ENCODE measurements at regions of chr12 and their contacts with region 1.

Region 1: DNA sequence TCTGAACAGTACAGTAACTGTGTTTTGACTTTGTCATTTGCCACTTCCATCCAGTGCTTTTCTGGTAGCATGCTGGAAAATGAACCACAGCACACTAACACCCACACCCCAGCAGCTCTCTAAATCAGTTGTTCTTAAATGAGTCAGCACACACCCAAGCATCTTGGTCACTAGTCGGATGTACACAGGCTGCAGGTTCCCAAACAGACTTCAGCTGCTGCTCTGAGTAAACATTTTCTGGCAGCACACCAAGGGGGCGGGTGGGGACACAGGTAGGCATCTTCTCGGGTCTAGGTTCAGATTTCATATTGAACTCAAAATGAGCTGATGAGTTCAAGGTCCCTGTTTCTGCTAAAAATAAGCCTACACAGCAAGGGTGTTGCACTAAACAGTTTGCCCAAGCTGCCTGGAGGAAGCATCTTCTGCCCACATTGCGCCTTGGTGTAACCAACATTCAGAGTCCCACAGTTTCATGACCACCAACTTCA is 39.8 kb downstream of the IFNG start:
- DNase-seq: peak; percentile 74
- H3K4me3 Mint-ChIP-seq: peak overlapping the region; percentile 15
- H3K27ac Mint-ChIP-seq: no peak overlapping the region
- H3K4me1 Mint-ChIP-seq: peaks cover 48% of the 10 kb centered on the region
- H3K27me3 Mint-ChIP-seq: no peaks in the 10 kb centered on the region

Region 2: DNA sequence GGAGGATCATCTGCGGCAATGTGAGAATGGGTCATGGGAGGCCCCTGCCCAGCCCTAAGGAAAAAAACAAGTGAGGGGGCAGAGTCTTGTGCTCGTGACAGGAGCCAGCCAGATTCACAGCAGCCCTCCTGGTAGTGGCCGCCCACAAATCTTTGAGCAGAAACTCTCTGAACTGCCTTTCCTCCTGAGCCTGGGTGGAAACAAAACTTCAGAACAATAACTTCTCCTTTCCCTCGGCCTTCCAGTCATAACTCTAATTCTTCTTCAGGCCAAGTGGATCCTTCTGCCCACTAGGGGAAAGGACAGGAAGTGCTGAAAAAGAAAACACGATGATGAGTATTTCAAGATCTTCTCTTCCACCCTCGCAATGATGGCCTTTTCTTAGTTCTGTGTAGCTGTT is 662.0 kb before region 1 on chr12:
- intact Hi-C with region 1: loop called (anchors 10 kb)
- DNase-seq: no peak
- H3K4me3 Mint-ChIP-seq: no peak overlapping the region
- H3K27ac Mint-ChIP-seq: no peak overlapping the region
- H3K4me1 Mint-ChIP-seq: peaks cover 6% of the 10 kb centered on the region
- H3K27me3 Mint-ChIP-seq: peaks cover 27% of the 10 kb centered on the region

Region 3: DNA sequence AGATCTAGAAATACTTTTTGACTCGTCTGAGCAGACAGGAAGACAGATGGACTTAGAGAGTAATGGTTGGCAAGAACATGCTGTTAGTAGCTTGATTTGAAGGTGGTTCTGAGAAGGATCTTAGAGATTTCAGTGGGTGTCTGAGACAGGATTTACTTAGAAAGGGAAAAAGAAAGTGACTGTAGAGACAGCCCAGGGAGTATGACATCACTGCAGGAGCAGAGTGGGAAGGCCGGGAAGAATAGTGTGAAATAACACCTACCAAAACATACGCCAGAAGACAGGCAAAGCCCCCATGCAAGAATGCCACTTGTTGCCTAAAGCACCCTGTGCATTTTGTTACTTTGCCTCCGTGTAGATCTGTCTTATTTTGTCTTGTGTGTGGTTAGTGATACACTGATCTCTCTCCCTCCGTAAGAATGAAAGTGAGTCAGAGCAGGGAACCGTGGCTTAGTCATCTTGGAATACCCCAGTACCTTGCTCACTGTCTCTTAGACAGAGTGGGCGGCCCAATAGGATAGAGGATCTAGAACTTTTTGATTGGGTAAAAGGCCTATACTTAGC is 291.9 kb before region 1 on chr12:
- intact Hi-C with region 1: loop called (anchors 5 kb)
- DNase-seq: no peak
- H3K4me3 Mint-ChIP-seq: peak overlapping the region; percentile 3
- H3K27ac Mint-ChIP-seq: peak overlapping the region; percentile 67
- H3K4me1 Mint-ChIP-seq: peaks cover 14% of the 10 kb centered on the region
- H3K27me3 Mint-ChIP-seq: no peaks in the 10 kb centered on the region

Region 4: DNA sequence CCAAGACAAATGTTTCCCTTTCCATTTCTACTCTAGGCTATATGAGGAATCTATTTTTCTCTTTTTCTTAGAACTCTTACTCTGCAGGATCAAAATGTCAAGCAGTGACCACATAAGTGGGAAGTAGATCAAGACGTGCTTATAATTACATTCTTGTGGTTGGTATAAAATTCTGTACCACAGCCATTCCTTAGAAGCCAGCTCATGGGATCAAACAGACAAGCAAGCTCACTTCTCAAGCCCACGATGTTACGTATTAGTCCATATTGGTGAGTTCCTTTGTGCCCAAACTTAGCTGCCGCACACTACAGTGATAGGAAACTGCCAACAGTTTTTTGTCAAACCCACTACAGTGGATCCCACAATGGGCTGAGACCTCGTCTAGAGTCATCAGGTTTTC is 13.6 kb before region 1 on chr12:
- intact Hi-C with region 1: loop called (anchors 1 kb)
- DNase-seq: no peak
- H3K4me3 Mint-ChIP-seq: no peak overlapping the region
- H3K27ac Mint-ChIP-seq: no peak overlapping the region
- H3K4me1 Mint-ChIP-seq: peaks cover 16% of the 10 kb centered on the region
- H3K27me3 Mint-ChIP-seq: no peaks in the 10 kb centered on the region

Region 5: DNA sequence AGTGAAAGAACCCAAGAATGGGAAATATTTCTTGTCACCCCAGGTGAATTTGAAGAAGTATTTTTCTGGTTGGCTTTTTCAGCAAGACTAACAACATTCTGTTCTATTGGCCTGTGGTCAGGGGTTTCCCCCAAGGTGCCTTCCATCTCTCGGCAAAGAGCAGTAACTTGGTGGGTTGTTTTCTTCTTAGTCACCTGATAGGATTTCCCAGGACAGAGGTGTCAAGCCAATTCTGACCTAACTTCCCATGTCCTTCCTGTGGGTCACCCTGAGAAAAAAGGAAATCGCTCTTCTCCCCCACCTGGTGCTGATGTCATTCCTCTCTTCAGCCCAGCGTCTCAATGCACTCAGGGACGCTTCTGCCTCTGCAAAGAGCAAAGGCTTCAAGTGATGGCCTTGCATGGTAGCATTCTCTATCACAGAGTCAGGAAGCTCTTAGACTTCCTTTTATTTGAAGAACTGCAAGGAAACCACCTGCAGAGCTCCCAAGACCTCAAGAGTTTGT is 55.8 kb after region 1 on chr12:
- intact Hi-C with region 1: loop called (anchors 1 kb)
- DNase-seq: peak; percentile 81
- H3K4me3 Mint-ChIP-seq: peak overlapping the region; percentile 32
- H3K27ac Mint-ChIP-seq: peak overlapping the region; percentile 85
- H3K4me1 Mint-ChIP-seq: peaks cover 81% of the 10 kb centered on the region
- H3K27me3 Mint-ChIP-seq: no peaks in the 10 kb centered on the region

Region 6: GRCh38 chr12:68259318-68259940 is 139.7 kb after region 1 on chr12:
- intact Hi-C with region 1: loop called (anchors 2 kb)
- DNase-seq: peak; percentile 31
- H3K4me3 Mint-ChIP-seq: peak overlapping the region; percentile 12
- H3K27ac Mint-ChIP-seq: peak overlapping the region; percentile 69
- H3K4me1 Mint-ChIP-seq: peaks cover 68% of the 10 kb centered on the region
- H3K27me3 Mint-ChIP-seq: peaks cover 19% of the 10 kb centered on the region

Region 7: GRCh38 chr12:68303850-68304249 is 184.1 kb after region 1 on chr12:
- intact Hi-C with region 1: loop called (anchors 1 kb)
- DNase-seq: no peak
- H3K4me3 Mint-ChIP-seq: no peak overlapping the region
- H3K27ac Mint-ChIP-seq: no peak overlapping the region
- H3K4me1 Mint-ChIP-seq: peaks cover 59% of the 10 kb centered on the region
- H3K27me3 Mint-ChIP-seq: no peaks in the 10 kb centered on the region

Region 8: DNA sequence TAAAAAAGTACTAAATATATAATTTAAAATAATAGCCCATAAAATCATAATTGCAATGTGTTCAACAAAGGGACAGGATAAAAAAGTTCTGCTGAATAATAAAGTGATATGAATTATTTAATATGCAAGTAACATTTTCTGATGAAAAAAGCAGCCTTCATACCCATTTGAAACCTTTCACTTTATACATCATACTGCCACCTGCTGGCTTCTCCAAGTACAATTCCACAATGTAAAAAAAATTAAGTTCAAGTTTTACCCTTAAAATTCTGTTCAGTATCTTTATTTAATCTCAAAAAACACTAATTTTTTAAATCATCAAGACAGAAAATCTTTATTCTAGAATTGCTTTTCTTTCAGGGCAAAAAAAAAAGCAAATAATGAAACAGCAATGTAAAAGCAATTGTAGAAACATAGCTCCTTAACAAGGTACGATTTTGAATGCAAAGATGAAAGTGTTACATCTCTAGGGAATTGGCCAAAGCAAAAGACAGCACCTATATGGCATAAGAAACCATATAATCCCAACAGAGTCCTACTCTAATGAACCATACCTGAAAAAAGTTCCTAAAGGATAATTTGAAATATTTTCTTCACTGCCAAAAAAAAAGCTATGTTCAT is 197.4 kb after region 1 on chr12:
- intact Hi-C with region 1: no loop called
- DNase-seq: no peak
- H3K4me3 Mint-ChIP-seq: no peak overlapping the region
- H3K27ac Mint-ChIP-seq: no peak overlapping the region
- H3K4me1 Mint-ChIP-seq: peaks cover 17% of the 10 kb centered on the region
- H3K27me3 Mint-ChIP-seq: no peaks in the 10 kb centered on the region

Measured in activated T-helper 1 cell treated with anti-CD3 and anti-CD28 coated beads, Interleukin-12 subunit alpha, Interleukin-12 subunit beta, Interleukin-2, Interleukin-4 antibody, amounts not matched to agents 30 ng/mL and 10 ng/mL and 1 ng/mL, durations not matched to agents 14 hours and 24 hours and 36 hours (primary cell).